Activated naive CD4-positive, alpha-beta T cell treated with anti-CD3 and anti-CD28 coated beads for 36 hours (primary cell): ENCODE measurements at regions of chr1 and their contacts with region 1.

Region 1: DNA sequence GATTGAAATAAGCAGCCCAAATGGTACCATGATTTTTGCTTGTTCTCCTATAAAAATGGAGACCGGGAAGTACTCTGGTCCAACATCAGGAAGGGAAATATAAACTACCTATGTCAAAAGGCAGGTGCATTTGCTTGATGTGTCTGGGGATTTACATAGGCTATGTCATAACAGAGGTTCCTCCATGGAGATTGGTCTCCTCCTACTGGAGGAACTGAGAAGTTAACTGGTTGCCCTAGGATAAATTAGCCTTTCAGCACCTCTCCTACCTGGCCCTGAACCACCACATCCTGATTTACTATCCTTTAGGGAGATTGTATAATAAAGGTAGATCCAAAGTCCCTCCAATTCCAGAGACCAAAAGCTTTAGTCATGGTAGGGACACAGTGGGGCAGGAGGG is 1109.3 kb upstream of the B3GALT2 start:
- DNase-seq: peak; percentile 47
- H3K4me3 Mint-ChIP-seq: no peak overlapping the region
- H3K27ac Mint-ChIP-seq: no peak overlapping the region
- H3K4me1 Mint-ChIP-seq: peaks cover 47% of the 10 kb centered on the region
- H3K27me3 Mint-ChIP-seq: no peaks in the 10 kb centered on the region

Region 2: GRCh38 chr1:192639607-192640368 is 1655.9 kb before region 1 on chr1:
- CTCF ChIA-PET with region 1: no interaction called
- intact Hi-C with region 1: loop called (anchors 5 kb)
- DNase-seq: peak; percentile 12
- H3K4me3 Mint-ChIP-seq: no peak overlapping the region
- H3K27ac Mint-ChIP-seq: no peak overlapping the region
- H3K4me1 Mint-ChIP-seq: peaks cover 18% of the 10 kb centered on the region
- H3K27me3 Mint-ChIP-seq: peaks cover 7% of the 10 kb centered on the region

Region 3: DNA sequence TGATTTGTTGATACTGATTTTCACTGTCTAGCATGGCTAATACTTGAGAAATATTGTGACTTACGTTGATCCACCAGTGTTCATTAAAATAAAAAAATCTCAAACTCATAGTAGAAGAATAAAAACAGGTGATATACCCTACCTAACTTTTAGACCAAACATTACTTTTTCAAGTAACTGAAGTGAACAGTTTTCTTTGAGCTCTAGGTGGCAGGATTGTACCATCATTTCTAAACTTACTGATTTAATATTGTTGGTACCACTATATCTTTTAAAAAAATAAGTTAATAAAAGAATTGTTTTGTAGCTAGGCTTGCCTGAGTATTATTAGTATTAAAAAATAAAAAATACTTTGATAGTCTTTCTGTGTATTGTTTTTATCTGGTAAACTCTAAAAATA is 1152.4 kb before region 1 on chr1:
- CTCF ChIA-PET with region 1: no interaction called
- intact Hi-C with region 1: loop called (anchors 1 kb)
- DNase-seq: no peak
- H3K4me3 Mint-ChIP-seq: no peak overlapping the region
- H3K27ac Mint-ChIP-seq: no peak overlapping the region
- H3K4me1 Mint-ChIP-seq: peaks cover 15% of the 10 kb centered on the region
- H3K27me3 Mint-ChIP-seq: no peaks in the 10 kb centered on the region

Region 4: DNA sequence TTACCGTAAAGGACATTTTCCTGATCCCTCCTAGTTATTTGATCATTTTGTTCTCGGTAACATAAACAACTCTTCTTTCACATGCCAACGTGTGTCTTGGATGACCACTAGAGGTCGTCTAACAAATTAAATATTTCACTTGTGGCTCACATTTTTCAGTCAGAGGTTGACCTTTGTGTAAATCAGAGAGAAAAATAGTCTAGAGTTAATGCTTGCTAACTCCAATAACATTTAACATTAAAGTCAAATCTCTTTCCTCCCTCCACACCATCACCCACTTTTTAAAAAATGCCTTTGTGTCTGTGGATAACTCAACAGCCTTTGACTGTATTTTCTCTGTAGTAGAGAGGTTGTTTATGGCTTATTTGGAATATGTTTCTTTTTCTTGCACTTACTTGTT is 888.8 kb before region 1 on chr1:
- CTCF ChIA-PET with region 1: no interaction called
- intact Hi-C with region 1: loop called (anchors 1 kb)
- DNase-seq: no peak
- H3K4me3 Mint-ChIP-seq: no peak overlapping the region
- H3K27ac Mint-ChIP-seq: no peak overlapping the region
- H3K4me1 Mint-ChIP-seq: peaks cover 26% of the 10 kb centered on the region
- H3K27me3 Mint-ChIP-seq: no peaks in the 10 kb centered on the region

Region 5: DNA sequence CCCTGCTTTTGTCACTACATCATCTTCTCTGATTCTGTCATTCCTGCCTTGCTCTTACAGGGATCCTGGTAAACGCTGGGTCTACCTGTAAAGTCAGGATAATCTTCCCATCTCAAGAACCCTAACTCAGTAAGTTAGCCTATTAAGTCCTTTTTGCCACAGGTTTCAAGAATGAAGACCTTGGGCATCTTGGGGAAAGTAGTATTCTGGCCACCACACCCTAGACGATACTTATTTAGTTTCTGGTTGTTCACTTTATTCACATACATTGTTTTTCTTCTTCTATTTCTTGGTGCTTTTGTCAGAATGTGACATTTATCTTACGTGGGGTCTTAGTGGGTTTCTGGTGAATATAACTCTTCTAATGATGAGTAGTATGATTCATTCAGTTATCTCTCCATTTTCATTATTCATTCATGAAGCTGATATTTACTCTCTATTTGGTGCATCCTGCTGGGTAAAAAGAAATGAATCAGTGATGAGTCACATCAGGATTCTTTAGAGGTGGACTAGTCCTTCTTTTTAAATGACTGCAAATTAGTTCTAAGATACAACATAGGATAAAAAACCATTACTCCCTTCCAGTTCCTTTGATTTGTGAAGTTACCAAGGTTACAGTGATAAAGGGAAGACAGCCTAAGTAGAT is 594.9 kb before region 1 on chr1:
- CTCF ChIA-PET with region 1: no interaction called
- intact Hi-C with region 1: loop called (anchors 2 kb)
- DNase-seq: no peak
- H3K4me3 Mint-ChIP-seq: no peak overlapping the region
- H3K27ac Mint-ChIP-seq: no peak overlapping the region
- H3K4me1 Mint-ChIP-seq: peaks cover 15% of the 10 kb centered on the region
- H3K27me3 Mint-ChIP-seq: no peaks in the 10 kb centered on the region

Region 6: DNA sequence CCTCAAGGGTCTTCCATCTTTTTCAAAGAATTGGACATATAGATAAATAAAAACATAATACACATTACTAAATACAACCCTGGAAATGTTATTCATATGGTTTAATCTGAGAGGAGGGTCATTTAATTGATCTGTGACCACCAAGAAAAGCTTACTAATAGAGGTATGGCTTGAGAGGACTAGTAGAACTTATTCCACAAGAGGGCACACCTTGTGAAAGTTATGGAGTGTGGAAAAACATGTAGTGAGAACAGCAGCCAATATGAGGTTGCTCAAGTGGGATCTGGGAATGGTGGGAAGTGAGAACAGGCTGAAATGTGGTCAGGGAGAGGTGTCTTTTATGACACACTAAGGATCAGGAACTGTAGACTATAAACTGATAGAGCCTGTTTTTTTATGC is 135.7 kb before region 1 on chr1:
- CTCF ChIA-PET with region 1: no interaction called
- intact Hi-C with region 1: loop called (anchors 5 kb)
- DNase-seq: no peak
- H3K4me3 Mint-ChIP-seq: no peak overlapping the region
- H3K27ac Mint-ChIP-seq: no peak overlapping the region
- H3K4me1 Mint-ChIP-seq: peaks cover 3% of the 10 kb centered on the region
- H3K27me3 Mint-ChIP-seq: no peaks in the 10 kb centered on the region